Gastrocnemius medialis (tissue), 4 donors: ENCODE measurements at regions of chr19 and their contacts with region 1.

Region 1: DNA sequence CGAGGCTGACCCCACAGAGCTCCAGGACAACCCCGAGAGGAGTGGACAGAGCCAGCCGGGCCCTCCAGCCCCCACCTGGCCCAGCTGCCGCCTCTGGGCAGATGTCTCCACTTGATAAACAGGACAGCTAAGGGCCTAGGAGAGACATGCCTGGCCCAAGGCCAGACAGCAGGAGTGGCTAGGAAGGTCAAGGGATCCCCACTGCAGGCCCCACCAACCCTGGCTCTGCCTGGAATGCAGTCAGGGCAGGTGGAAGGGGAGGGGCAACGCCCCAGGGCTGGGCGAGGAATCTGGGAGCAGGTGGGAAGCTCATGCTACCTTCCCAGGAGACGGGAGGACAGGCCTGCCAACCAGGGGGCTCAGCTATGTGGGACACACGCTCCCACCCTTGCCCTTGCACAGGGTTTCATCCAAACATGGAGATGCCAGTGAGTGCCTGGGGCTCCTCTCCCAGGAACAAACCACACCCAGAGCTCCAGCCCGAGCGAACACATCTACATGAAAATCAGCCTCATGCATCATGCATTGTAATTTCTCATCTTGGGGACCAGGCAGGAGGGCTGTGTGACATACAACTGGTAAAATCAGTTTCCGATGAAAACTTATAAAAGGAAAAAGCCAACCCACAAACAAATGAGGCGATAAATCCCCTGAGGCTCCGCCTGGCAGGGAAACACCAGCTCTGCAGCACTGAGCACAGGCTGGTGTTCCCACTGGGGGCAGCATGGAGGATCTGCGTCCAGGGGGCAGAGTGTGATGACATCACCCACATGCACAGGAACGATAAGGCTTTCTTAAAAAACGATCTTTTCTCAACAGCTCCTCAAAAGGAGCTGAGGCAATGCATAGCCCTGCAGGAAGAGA is 25.0 kb downstream of the SH3GL1 start:
- DNase-seq: peak in 1 of 2 donors; percentile 41
- ATAC-seq: no peak
- H3K4me3 ChIP-seq: peak overlapping the region in 1 of 4 donors; percentile 4
- H3K27ac ChIP-seq: peak overlapping the region; percentile 83 to 95 (median 92)
- H3K4me1 ChIP-seq: peaks cover 99 to 100% of the 10 kb centered on the region in 2 donors
- H3K27me3 ChIP-seq: no peaks in the 10 kb centered on the region
- CTCF ChIP-seq: no peak
- POLR2A ChIP-seq: no peak

Region 2: GRCh38 chr19:4304530-4305252 is 70.7 kb before region 1 on chr19 and contains the start of gene FSD1:
- in situ Hi-C with region 1: no loop called
- intact Hi-C with region 1: no loop called
- DNase-seq: no peak
- ATAC-seq: no peak
- H3K4me3 ChIP-seq: no peak within 1 kb of the TSS
- H3K27ac ChIP-seq: no peak within 1 kb of the TSS
- H3K4me1 ChIP-seq: no peaks in the 10 kb centered on the region
- H3K27me3 ChIP-seq: peaks cover 12 to 19% (median 13%) of the 10 kb centered on the region in 3 donors
- CTCF ChIP-seq: no peak
- POLR2A ChIP-seq: no peak
- total RNA-seq, gene FSD1: not detected

Region 3: DNA sequence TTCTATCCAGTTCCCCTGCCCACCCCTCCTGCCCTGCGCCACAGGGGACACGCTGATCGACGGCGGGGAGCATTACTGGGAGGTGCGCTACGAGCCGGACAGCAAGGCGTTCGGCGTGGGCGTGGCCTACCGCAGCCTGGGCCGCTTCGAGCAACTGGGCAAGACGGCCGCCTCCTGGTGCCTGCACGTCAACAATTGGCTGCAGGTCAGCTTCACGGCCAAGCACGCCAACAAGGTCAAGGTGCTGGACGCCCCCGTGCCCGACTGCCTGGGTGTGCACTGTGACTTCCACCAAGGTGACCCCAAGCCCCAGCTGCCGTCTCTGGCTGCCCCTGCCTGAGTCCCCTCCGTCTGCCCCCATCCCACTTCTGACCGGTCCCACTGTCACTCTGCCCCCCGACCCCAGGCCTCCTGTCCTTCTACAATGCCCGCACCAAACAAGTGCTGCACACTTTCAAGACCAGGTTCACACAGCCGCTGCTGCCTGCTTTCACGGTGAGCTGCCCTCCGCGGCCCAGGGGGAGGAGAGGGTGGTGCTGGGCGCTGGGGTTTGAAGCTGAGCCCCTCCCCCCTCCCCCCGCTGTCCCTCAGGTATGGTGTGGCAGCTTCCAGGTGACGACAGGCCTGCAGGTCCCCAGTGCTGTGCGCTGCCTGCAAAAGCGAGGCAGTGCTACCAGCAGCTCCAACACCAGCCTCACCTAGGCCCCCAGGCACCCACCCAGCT is 52.3 kb before region 1 on chr19:
- in situ Hi-C with region 1: no loop called
- intact Hi-C with region 1: no loop called
- DNase-seq: no peak
- ATAC-seq: no peak
- H3K4me3 ChIP-seq: no peak overlapping the region
- H3K27ac ChIP-seq: no peak overlapping the region
- H3K4me1 ChIP-seq: peaks cover 0 to 13% of the 10 kb centered on the region in 2 donors
- H3K27me3 ChIP-seq: peaks cover 11 to 17% (median 16%) of the 10 kb centered on the region in 3 donors
- CTCF ChIP-seq: no peak
- POLR2A ChIP-seq: no peak

Region 4: GRCh38 chr19:4390567-4391305 is 15.3 kb after region 1 on chr19:
- in situ Hi-C with region 1: no loop called
- intact Hi-C with region 1: loop called (anchors 2 kb)
- DNase-seq: no peak
- ATAC-seq: no peak
- H3K4me3 ChIP-seq: peak overlapping the region in 2 of 4 donors; percentile 13 to 18
- H3K27ac ChIP-seq: peak overlapping the region; percentile 83 to 90 (median 86)
- H3K4me1 ChIP-seq: peaks cover 56 to 73% of the 10 kb centered on the region in 2 donors
- H3K27me3 ChIP-seq: no peaks in the 10 kb centered on the region
- CTCF ChIP-seq: no peak
- POLR2A ChIP-seq: no peak

Region 5: DNA sequence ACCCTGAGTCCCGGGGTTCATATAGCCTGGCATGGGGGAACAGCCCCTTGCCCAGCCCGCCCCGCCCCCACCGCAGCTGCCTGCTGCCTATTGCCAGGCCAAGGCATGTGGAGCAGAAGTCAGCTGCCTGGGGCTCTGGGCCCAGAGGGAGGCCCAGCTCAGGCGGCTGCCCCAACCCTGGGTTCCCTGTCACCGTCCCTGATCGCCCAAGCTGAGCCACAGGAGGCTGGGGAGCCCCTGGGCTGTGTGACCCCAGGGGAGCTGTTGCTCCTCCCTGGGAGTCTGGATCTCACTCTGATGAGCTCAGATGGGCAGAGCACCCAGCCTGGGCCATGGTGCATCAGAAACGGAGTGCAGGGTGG is 141.5 kb after region 1 on chr19:
- in situ Hi-C with region 1: no loop called
- intact Hi-C with region 1: loop called (anchors 2 kb)
- DNase-seq: peak; percentile 85 to 92
- ATAC-seq: peak; percentile 59 to 60
- H3K4me3 ChIP-seq: peak overlapping the region; percentile 61 to 78 (median 70)
- H3K27ac ChIP-seq: peak overlapping the region; percentile 97 to 99 (median 98)
- H3K4me1 ChIP-seq: peaks cover 45 to 59% of the 10 kb centered on the region in 2 donors
- H3K27me3 ChIP-seq: no peaks in the 10 kb centered on the region
- CTCF ChIP-seq: no peak
- POLR2A ChIP-seq: peak; percentile 71 to 76